ENCODE measurements at regions of chr19 and their contacts with region 1.

Region 1: GRCh38 chr19:48588670-48589399 is 17.7 kb upstream of the SPACA4 start:
- DNase-seq: peak; percentile 40 to 92
- H3K4me3 ChIP-seq: peak overlapping the region; percentile 43 to 51
- H3K27ac ChIP-seq: no peak overlapping the region
- H3K4me1 ChIP-seq: peaks cover 0 to 7% of the 10 kb centered on the region in 2 donors
- H3K27me3 ChIP-seq: no peaks in the 10 kb centered on the region
- CTCF ChIP-seq: peak; percentile 89 to 95 (median 94)

Region 2: DNA sequence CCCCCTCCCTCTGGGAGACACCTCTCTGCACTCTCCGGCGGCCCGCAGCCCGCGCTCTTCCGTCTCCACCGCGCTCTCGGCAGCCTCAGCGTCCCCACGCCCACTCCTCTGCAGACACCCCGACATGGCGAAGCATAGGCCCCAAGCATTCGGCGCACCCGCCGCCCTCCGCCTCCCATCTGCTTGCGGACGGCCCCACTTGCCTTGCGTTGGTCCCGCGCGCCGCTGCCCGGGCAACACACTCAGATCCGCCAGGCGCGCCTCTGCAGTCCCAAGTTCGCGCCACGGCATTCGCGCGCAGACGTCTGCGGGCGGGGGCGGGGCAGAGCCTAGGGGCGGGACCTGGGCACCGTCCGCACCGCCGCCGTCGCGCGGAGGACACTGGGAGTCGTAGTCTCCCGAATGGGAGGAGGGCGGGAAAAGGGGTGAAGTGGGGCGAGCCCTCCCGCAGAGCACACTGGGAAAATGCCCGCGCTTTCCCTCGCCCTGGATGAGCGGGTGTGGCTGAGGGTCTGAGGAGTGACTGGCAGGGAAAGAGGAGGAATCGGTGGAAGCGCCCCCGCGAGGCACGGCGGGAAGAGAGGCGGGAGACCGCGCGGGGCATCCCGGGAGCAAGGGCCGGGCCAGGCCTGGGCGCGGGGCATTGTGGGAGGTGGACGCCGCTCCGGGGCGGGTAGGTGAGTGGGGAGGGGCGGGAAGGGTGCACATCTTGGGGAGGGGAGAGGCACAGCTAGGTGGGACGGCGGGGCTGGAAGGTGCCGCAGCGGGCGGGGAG is 418.6 kb before region 1 on chr19 and contains the starts of genes LIG1 and ZSWIM9:
- intact Hi-C with region 1: no loop called
- DNase-seq: peak; percentile 65 to 93
- H3K4me3 ChIP-seq: peak within 1 kb of the TSS; percentile 65 to 85
- H3K27ac ChIP-seq: peak within 1 kb of the TSS; percentile 82 to 88
- H3K4me1 ChIP-seq: peaks cover 3 to 7% of the 10 kb centered on the region in 2 donors
- H3K27me3 ChIP-seq: no peaks in the 10 kb centered on the region
- CTCF ChIP-seq: peak in 1 of 3 experiments; percentile 14
- total RNA-seq, gene LIG1: 0.64 TPM
- total RNA-seq, gene ZSWIM9: 16.0 TPM

Region 3: DNA sequence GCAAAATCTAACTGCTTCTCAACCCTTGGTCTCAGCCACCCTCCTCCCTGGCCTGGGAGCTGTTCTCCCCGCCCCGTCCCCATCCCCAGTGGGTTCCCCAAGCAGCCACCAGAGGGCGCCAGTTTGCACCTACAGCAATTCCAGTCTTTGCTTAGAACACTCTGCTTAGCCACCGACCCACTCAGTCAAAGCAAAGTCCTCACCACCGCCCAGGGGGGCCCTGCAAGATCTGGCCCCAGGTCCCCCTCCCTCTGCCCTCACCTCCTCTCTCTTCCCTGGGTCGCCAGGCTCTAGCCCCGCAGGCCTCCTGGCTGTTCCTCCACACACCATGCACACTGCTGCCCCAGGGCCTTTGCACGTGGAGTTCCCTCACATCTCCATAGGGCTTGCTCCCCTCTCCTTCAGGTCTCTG is 237.5 kb before region 1 on chr19:
- intact Hi-C with region 1: loop called (anchors 1 kb)
- DNase-seq: peak in 1 of 2 donors; percentile 82
- H3K4me3 ChIP-seq: no peak overlapping the region
- H3K27ac ChIP-seq: no peak overlapping the region
- H3K4me1 ChIP-seq: no peaks in the 10 kb centered on the region
- H3K27me3 ChIP-seq: no peaks in the 10 kb centered on the region
- CTCF ChIP-seq: peak; percentile 48 to 72 (median 61)

Region 4: GRCh38 chr19:48391107-48391986 is 197.5 kb before region 1 on chr19 and contains the start of gene KDELR1:
- intact Hi-C with region 1: loop called (anchors 2 kb)
- DNase-seq: peak in 1 of 2 donors; percentile 80
- H3K4me3 ChIP-seq: peak within 1 kb of the TSS; percentile 85 to 94
- H3K27ac ChIP-seq: peak within 1 kb of the TSS; percentile 91 to 94
- H3K4me1 ChIP-seq: peaks cover 0 to 14% of the 10 kb centered on the region in 2 donors
- H3K27me3 ChIP-seq: peaks cover 28% of the 10 kb centered on the region
- CTCF ChIP-seq: peak; percentile 82 to 94 (median 90)
- total RNA-seq, gene KDELR1: 183 TPM

Region 5: GRCh38 chr19:48492925-48493717 is 95.7 kb before region 1 on chr19:
- intact Hi-C with region 1: loop called (anchors 1 kb)
- DNase-seq: peak; percentile 89 to 95
- H3K4me3 ChIP-seq: peak overlapping the region; percentile 58 to 72
- H3K27ac ChIP-seq: peak overlapping the region; percentile 37 to 61
- H3K4me1 ChIP-seq: peaks cover 0 to 10% of the 10 kb centered on the region in 2 donors
- H3K27me3 ChIP-seq: peaks cover under 1% of the 10 kb centered on the region
- CTCF ChIP-seq: no peak

Region 6: GRCh38 chr19:48618916-48619691 is 30.3 kb after region 1 on chr19 and contains the starts of genes RPL18 and SPHK2:
- intact Hi-C with region 1: loop called (anchors 2 kb)
- DNase-seq: peak; percentile 94 to 99
- H3K4me3 ChIP-seq: peak within 1 kb of the TSS; percentile 68 to 95
- H3K27ac ChIP-seq: peak within 1 kb of the TSS; percentile 86 to 87
- H3K4me1 ChIP-seq: peaks cover 16 to 27% of the 10 kb centered on the region in 2 donors
- H3K27me3 ChIP-seq: no peaks in the 10 kb centered on the region
- CTCF ChIP-seq: no peak
- total RNA-seq, gene RPL18: 2,223 TPM
- total RNA-seq, gene SPHK2: 35.3 TPM

Region 7: GRCh38 chr19:48698046-48698445 is 109.2 kb after region 1 on chr19:
- intact Hi-C with region 1: no loop called
- DNase-seq: no peak
- H3K4me3 ChIP-seq: no peak overlapping the region
- H3K27ac ChIP-seq: no peak overlapping the region
- H3K4me1 ChIP-seq: no peaks in the 10 kb centered on the region
- H3K27me3 ChIP-seq: no peaks in the 10 kb centered on the region
- CTCF ChIP-seq: no peak